Activated CD4-positive, alpha-beta T cell treated with anti-CD3 and anti-CD28 coated beads, Interleukin-2, amount 10 ng/mL, durations not matched to agents 24 days and 14 days (primary cell): ENCODE measurements at regions of chr10 and their contacts with region 1.

Region 1: GRCh38 chr10:105797234-105797890 is 1156.3 kb downstream of the SORCS3 start:
- DNase-seq: no peak
- H3K4me3 Mint-ChIP-seq: no peak overlapping the region
- H3K27ac Mint-ChIP-seq: no peak overlapping the region
- H3K4me1 Mint-ChIP-seq: no peaks in the 10 kb centered on the region
- H3K27me3 Mint-ChIP-seq: no peaks in the 10 kb centered on the region

Region 2: GRCh38 chr10:105769248-105770184 is 27.8 kb before region 1 on chr10:
- intact Hi-C with region 1: no loop called
- DNase-seq: no peak
- H3K4me3 Mint-ChIP-seq: no peak overlapping the region
- H3K27ac Mint-ChIP-seq: no peak overlapping the region
- H3K4me1 Mint-ChIP-seq: no peaks in the 10 kb centered on the region
- H3K27me3 Mint-ChIP-seq: peaks cover 2% of the 10 kb centered on the region

Region 3: DNA sequence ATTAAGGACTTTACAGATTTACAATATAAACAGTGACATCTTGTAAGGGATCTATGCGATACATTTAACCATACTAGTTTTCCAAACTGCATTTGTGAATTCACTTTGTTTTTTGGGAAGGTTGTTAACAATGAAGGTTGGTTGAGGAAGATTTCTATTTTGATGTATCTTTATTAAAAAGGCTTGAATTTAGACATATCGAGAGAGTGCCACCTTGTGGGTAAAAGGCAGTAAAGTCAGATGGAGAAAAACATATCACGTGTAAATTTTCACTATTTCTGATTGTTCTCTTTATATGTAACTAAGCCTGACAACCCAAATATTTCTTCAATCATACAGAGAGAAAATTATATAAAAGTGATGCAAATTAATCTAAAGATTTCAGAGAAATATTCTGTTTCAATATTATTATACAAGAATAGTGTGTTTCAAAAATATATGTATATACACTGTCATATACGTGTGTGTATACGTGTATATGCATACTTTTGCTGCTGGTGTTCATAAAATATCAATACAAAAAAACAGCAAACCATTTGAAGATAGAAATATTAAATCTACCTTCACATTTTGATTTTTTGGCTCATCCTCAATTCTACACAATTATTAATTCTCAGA is 378.5 kb after region 1 on chr10:
- intact Hi-C with region 1: loop called (anchors 10 kb)
- DNase-seq: no peak
- H3K4me3 Mint-ChIP-seq: no peak overlapping the region
- H3K27ac Mint-ChIP-seq: no peak overlapping the region
- H3K4me1 Mint-ChIP-seq: no peaks in the 10 kb centered on the region
- H3K27me3 Mint-ChIP-seq: no peaks in the 10 kb centered on the region